Panc1 (cell line): ENCODE measurements at regions of chr9 and their contacts with region 1.

Region 1: GRCh38 chr9:33239921-33240320 is at the start of gene SPINK4:
- DNase-seq: no peak
- ATAC-seq: peak; percentile 8; the same call in 1 of the 2 replicates
- H3K4me3 ChIP-seq: no peak within 1 kb of the TSS
- H3K27ac ChIP-seq: no peak within 1 kb of the TSS
- H3K4me1 ChIP-seq: no peaks in the 10 kb centered on the region
- H3K27me3 ChIP-seq: no peaks in the 10 kb centered on the region
- CTCF ChIP-seq: no peak
- total RNA-seq, gene SPINK4: not detected

Region 2: DNA sequence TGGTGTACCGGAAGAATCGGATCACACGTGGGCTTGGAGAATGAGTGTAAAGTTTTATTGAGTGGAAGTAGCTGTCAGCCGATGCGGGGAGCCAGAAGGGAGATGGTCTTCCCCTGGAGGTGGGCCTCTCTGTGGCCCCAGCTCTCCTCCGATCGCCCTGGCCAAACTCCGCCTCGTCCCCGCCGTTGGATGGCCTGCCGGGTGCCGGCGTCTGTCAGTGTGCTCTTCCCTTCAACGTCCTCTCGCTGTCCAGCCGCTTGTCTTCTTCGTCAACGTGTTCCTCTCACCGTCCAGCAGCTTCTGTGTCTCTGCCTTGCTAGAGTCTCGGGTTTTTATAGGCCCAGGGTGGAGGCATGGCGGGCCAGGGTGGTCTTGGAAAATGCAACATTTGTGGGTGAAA is 484.2 kb before region 1 on chr9:
- CTCF ChIA-PET with region 1: no interaction called
- POLR2A ChIA-PET with region 1: no interaction called
- in situ Hi-C with region 1: no loop called
- intact Hi-C with region 1: no loop called
- DNase-seq: no peak
- ATAC-seq: no peak
- H3K4me3 ChIP-seq: no peak overlapping the region
- H3K27ac ChIP-seq: no peak overlapping the region
- H3K4me1 ChIP-seq: no peaks in the 10 kb centered on the region
- H3K27me3 ChIP-seq: 0 out of 2 replicates have a peak, but pooled peaks cover under 1% of the 10 kb centered on the region
- CTCF ChIP-seq: no peak

Region 3: DNA sequence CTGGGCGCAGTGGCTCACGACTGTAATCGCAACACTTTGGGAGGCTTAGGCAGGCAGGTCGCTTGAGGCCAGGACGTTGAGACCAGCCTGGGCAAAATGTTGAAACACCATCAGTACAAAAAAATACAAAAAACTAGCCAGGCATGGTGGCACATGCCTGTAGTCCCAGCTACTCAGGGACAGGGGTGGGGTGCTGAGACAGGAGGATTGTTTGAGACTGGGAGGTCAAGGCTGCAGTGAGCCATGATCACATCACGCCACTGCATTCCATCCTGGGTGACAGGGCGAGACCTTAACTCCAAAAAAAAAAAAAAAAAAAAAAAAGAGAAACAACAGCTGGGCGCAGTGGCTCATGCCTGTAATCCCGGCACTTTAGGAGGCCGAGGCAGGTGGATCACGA is 862.9 kb after region 1 on chr9:
- CTCF ChIA-PET with region 1: no interaction called
- POLR2A ChIA-PET with region 1: interaction called, 15 read pairs
- in situ Hi-C with region 1: no loop called
- intact Hi-C with region 1: no loop called
- DNase-seq: no peak
- ATAC-seq: no peak
- H3K4me3 ChIP-seq: no peak overlapping the region
- H3K27ac ChIP-seq: no peak overlapping the region
- H3K4me1 ChIP-seq: no peaks in the 10 kb centered on the region
- H3K27me3 ChIP-seq: no peaks in the 10 kb centered on the region
- CTCF ChIP-seq: no peak